ENCODE measurements at regions of chr5 and their contacts with region 1.

Region 1: GRCh38 chr5:171494452-171495121 is 75.1 kb downstream of the FGF18 start:
- DNase-seq: peak; percentile 87 to 91
- H3K4me3 ChIP-seq: peak overlapping the region; percentile 45; the same call in 1 of the 2 replicates
- H3K27ac ChIP-seq: peak overlapping the region; percentile 94
- H3K4me1 ChIP-seq: peaks cover 51% of the 10 kb centered on the region
- H3K27me3 ChIP-seq: no peaks in the 10 kb centered on the region
- CTCF ChIP-seq: no peak

Region 2: DNA sequence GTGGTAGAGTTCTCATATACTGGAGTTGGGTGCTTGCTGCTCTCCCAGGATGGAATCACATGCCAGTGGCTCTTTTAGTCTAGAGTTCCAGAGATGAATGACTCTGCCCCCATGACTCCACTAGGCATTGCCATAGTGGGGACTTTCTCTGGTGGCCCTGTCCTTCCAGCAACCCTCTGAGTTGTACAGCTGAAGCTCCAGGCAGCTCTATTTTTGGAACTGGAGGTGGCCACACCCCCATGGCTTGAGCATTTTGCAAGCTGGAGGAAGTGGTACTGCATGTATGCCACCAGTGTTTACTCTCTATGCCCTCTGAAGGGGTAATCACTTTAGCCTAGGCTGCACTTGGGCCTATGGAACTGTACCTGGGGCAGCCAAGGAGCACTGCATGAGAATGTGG is 520.1 kb before region 1 on chr5:
- CTCF ChIA-PET with region 1: no interaction called
- POLR2A ChIA-PET with region 1: no interaction called
- intact Hi-C with region 1: no loop called
- DNase-seq: no peak
- H3K4me3 ChIP-seq: no peak overlapping the region
- H3K27ac ChIP-seq: no peak overlapping the region
- H3K4me1 ChIP-seq: peaks cover 6% of the 10 kb centered on the region; the same call in 1 of the 2 replicates
- H3K27me3 ChIP-seq: no peaks in the 10 kb centered on the region
- CTCF ChIP-seq: no peak

Region 3: DNA sequence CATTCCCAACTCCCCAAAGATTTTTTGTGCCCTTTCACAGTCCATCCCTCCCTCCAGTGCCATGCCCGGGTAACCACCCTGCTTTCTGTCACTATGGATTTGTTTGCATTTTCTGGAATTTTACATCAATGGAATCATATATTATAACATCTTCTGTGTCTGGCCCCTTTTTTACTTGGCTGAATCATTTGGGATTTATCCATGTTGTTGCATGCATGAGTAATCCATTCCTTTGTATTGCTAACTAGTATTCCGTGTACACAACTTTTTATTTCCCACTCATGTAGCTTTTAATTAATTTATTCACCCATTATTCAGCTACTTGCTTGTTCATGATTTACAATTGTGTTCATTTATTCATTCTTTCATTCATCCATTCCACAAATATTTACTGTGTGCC is 19.0 kb after region 1 on chr5:
- CTCF ChIA-PET with region 1: no interaction called
- POLR2A ChIA-PET with region 1: interaction called, 18 read pairs
- intact Hi-C with region 1: loop called (anchors 1 kb)
- DNase-seq: no peak
- H3K4me3 ChIP-seq: no peak overlapping the region
- H3K27ac ChIP-seq: no peak overlapping the region
- H3K4me1 ChIP-seq: peaks cover 25% of the 10 kb centered on the region
- H3K27me3 ChIP-seq: no peaks in the 10 kb centered on the region
- CTCF ChIP-seq: no peak

Region 4: GRCh38 chr5:171537070-171537849 is 42.7 kb after region 1 on chr5:
- CTCF ChIA-PET with region 1: no interaction called
- POLR2A ChIA-PET with region 1: no interaction called
- intact Hi-C with region 1: no loop called
- DNase-seq: peak in 1 of 2 experiments; percentile 85
- H3K4me3 ChIP-seq: no peak overlapping the region
- H3K27ac ChIP-seq: peak overlapping the region; percentile 53
- H3K4me1 ChIP-seq: peaks cover 48% of the 10 kb centered on the region
- H3K27me3 ChIP-seq: no peaks in the 10 kb centered on the region
- CTCF ChIP-seq: no peak

Region 5: GRCh38 chr5:171595801-171596231 is 101.2 kb after region 1 on chr5:
- CTCF ChIA-PET with region 1: no interaction called
- POLR2A ChIA-PET with region 1: no interaction called
- intact Hi-C with region 1: loop called (anchors 5 kb)
- DNase-seq: peak; percentile 20 to 80
- H3K4me3 ChIP-seq: no peak overlapping the region
- H3K27ac ChIP-seq: peak overlapping the region; percentile 52
- H3K4me1 ChIP-seq: peaks cover 19% of the 10 kb centered on the region
- H3K27me3 ChIP-seq: peaks cover 3% of the 10 kb centered on the region; the same call in 1 of the 2 replicates
- CTCF ChIP-seq: no peak

Region 6: DNA sequence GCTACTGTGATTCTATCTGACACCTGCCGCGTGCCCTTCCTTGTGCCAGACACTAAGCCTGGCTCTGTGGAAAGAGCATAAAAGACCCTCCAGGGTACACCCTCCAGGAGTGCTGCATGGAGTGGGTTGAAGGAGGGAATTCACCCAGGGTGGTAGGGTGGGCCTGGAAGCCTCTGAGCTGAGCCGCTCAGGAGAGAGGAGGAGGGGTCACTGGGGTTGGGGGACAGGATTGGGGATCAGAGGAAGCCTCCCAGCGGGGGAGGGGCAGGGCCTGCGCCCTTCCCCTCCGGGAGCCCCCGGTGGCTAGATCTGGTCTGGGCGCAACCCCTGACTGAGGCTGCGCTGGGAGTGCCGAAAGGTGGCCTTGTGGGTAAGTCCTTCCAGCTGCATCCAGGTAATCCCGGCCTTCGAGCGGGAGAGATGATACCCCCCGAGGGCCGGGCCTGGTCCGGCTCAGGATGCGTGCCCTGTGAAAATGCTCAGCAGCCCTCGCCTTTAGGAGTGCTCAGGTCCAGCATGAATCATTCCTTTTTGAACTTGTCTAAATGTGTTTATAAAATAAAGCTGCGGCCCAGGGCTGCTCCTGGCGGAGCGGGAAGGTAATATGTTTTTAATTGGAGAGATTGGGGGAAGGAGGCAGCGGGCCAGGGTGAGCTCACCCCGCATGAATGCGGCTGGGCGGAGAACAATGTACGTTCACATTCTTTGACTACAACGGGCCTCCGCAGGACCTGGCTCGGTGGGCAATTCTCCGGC is 172.9 kb after region 1 on chr5:
- CTCF ChIA-PET with region 1: no interaction called
- POLR2A ChIA-PET with region 1: no interaction called
- intact Hi-C with region 1: loop called (anchors 5 kb)
- DNase-seq: peak in 1 of 2 experiments; percentile 62
- H3K4me3 ChIP-seq: no peak overlapping the region
- H3K27ac ChIP-seq: no peak overlapping the region
- H3K4me1 ChIP-seq: no peaks in the 10 kb centered on the region
- H3K27me3 ChIP-seq: peaks cover 19% of the 10 kb centered on the region; the same call in 1 of the 2 replicates
- CTCF ChIP-seq: no peak

Region 7: GRCh38 chr5:171840066-171840465 is 345.5 kb after region 1 on chr5:
- CTCF ChIA-PET with region 1: no interaction called
- POLR2A ChIA-PET with region 1: no interaction called
- intact Hi-C with region 1: no loop called
- DNase-seq: no peak
- H3K4me3 ChIP-seq: no peak overlapping the region
- H3K27ac ChIP-seq: no peak overlapping the region
- H3K4me1 ChIP-seq: no peaks in the 10 kb centered on the region
- H3K27me3 ChIP-seq: no peaks in the 10 kb centered on the region
- CTCF ChIP-seq: no peak

Measured in PC-9 (cell line).